Upper lobe of right lung (tissue), 1 donor: ENCODE measurements at regions of chr1 and their contacts with region 1.

Region 1: GRCh38 chr1:52139817-52140540 is 1.9 kb upstream of the ZFYVE9 start:
- DNase-seq: no peak
- ATAC-seq: no peak
- H3K4me3 ChIP-seq: no peak overlapping the region
- H3K27ac ChIP-seq: no peak overlapping the region
- H3K4me1 ChIP-seq: peaks cover 17% of the 10 kb centered on the region
- H3K27me3 ChIP-seq: no peaks in the 10 kb centered on the region
- CTCF ChIP-seq: no peak

Region 2: GRCh38 chr1:52296345-52296744 is 156.4 kb after region 1 on chr1:
- intact Hi-C with region 1: loop called (anchors 10 kb)
- DNase-seq: no peak
- ATAC-seq: peak; percentile 95
- H3K4me3 ChIP-seq: no peak overlapping the region
- H3K27ac ChIP-seq: no peak overlapping the region
- H3K4me1 ChIP-seq: no peaks in the 10 kb centered on the region
- H3K27me3 ChIP-seq: no peaks in the 10 kb centered on the region
- CTCF ChIP-seq: peak; percentile 69

Region 3: DNA sequence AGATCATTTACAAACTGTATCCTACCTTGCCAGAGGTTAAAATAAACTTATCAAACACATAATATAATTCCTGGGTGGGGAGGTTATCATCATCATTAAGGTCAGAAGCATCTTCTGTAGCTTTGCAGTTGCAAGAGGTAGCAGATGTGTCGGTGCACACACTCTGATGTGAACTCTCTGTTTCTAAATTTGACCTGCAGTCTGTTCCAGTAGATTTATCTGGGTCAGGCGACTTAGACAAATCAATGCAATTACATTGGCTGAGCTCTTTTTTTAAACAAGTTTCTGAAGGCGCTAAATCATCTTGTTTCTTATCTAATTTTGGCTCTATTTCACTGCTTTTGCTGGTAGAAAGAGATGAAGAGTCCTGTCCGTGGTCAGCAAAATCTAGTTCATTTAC is 334.8 kb after region 1 on chr1:
- intact Hi-C with region 1: no loop called
- DNase-seq: no peak
- ATAC-seq: no peak
- H3K4me3 ChIP-seq: no peak overlapping the region
- H3K27ac ChIP-seq: no peak overlapping the region
- H3K4me1 ChIP-seq: no peaks in the 10 kb centered on the region
- H3K27me3 ChIP-seq: no peaks in the 10 kb centered on the region
- CTCF ChIP-seq: no peak